Activated T-helper 1 cell treated with anti-CD3 and anti-CD28 coated beads, Interleukin-12 subunit alpha, Interleukin-12 subunit beta, Interleukin-2, Interleukin-4 antibody, amounts not matched to agents 30 ng/mL and 10 ng/mL and 1 ng/mL, durations not matched to agents 14 hours and 24 hours and 36 hours (primary cell): ENCODE measurements at regions of chr10 and their contacts with region 1.

Region 1: DNA sequence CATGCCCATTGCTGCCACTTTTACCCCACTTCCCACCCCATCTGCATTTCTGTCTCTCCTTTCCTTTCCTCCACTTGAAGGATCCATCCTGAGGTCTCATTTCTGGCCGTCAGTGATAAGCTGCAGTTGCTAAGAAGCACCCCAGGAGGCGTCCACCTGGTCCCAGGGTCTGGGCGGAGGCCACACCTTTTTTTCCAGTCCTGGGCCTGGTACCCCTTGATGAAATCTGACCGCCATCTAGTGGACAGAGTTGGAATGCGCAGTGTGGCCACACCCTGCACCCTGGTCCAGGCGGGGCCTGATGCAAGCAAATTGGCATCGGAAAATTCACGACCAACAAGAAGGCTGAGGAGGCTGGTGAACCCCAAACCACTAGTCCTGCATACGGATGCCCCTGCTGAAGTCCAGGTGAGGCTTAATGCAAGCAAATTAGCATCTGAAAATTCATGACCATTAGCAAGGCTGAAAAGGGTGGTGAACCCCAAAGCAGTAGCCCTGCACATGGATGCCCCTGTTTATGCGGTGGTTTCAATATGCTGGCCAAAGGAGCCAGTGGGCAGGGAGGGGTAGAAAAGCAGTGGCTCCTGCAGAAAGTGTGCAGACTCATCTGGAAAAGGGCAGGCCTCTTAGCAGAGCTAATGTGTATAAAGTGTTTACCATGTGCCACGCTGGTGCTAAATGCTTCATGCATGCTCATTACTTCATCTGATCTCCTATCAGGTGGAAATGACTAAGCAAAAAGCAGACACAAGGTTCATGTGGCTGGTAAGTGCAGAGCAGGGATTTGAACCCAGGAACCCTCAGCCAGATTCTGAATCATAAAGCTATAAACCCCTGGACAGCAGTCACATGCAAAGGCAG is 43.2 kb downstream of the GPAM start:
- DNase-seq: peak; percentile 55
- H3K4me3 Mint-ChIP-seq: no peak overlapping the region
- H3K27ac Mint-ChIP-seq: no peak overlapping the region
- H3K4me1 Mint-ChIP-seq: no peaks in the 10 kb centered on the region
- H3K27me3 Mint-ChIP-seq: peaks cover 7% of the 10 kb centered on the region

Region 2: GRCh38 chr10:111756217-111757061 is 383.9 kb before region 1 on chr10:
- intact Hi-C with region 1: loop called (anchors 5 kb)
- DNase-seq: no peak
- H3K4me3 Mint-ChIP-seq: no peak overlapping the region
- H3K27ac Mint-ChIP-seq: no peak overlapping the region
- H3K4me1 Mint-ChIP-seq: no peaks in the 10 kb centered on the region
- H3K27me3 Mint-ChIP-seq: peaks cover 4% of the 10 kb centered on the region

Region 3: DNA sequence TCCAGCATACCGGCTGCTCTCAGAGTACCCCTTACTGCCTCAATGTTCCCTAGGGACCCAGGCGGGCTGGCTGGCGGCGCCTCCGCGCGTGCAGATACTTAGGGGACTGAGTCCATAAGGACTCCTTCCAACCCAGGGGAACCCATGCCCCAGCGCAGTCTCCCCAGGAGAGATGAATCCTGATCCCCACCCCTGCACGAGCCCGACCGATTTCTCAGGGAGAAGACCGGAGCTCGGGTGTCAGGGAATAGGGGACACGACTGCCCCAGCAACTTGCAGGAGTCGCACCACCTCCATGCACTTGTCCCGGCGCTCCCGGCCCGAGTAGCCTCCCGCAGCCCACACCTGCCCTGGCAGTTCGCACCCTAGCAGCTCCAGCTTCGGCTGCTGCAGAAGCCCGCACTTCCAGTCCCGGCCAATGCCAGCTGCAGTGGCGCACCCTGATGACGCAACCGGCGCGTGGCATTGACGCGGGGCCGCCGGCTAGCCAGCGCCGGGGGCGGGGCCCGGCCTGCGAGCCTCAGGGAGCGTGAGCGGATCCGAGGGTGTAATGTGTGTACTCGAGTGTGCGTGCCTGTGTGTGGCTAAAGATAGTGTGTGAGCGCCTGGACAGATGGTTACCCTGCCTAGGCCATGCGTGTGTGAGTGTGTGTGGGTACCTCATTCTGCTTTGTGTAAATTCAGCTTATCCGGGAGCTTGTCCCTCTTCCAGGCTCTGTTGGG is 43.1 kb after region 1 on chr10 and contains the start of gene GPAM:
- intact Hi-C with region 1: loop called (anchors 1 kb)
- DNase-seq: peak; percentile 98
- H3K4me3 Mint-ChIP-seq: peak within 1 kb of the TSS; percentile 86
- H3K27ac Mint-ChIP-seq: peak within 1 kb of the TSS; percentile 93
- H3K4me1 Mint-ChIP-seq: peaks cover 34% of the 10 kb centered on the region
- H3K27me3 Mint-ChIP-seq: peaks cover 4% of the 10 kb centered on the region
- total RNA-seq, gene GPAM: 10.2 and 10.5 TPM in 2 replicates

Region 4: DNA sequence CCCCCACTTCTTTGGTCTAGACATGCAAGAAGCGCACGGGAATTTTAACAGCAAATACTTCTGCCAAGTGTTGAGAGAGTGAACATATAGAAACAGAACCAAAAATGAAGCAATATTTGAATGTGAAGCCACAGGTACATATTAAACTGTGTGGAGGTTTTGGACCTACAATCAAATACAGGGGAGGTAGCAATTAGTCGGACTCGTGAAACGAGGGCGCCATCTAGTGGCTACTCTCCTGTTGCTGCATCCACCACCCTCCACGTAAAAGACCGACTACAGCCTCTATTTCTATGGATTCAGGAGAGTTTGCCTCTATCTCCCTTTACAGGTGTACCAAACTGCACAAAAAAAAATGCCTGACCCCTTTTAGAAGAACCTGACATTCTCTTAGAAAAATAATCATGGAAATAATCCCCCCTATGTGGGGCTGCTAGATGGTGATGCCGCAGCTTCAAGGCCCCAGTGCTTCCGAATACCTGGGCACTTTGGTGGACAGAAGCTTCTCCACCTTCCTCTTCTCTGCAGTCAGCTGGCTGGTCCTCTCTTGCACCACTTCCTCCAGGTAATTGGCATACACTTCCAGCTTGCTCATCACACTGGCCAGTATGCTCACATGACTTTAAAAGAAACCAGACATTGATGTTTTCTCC is 174.6 kb after region 1 on chr10:
- intact Hi-C with region 1: loop called (anchors 1 kb)
- DNase-seq: peak; percentile 50
- H3K4me3 Mint-ChIP-seq: no peak overlapping the region
- H3K27ac Mint-ChIP-seq: no peak overlapping the region
- H3K4me1 Mint-ChIP-seq: peaks cover 4% of the 10 kb centered on the region
- H3K27me3 Mint-ChIP-seq: peaks cover 18% of the 10 kb centered on the region

Region 5: DNA sequence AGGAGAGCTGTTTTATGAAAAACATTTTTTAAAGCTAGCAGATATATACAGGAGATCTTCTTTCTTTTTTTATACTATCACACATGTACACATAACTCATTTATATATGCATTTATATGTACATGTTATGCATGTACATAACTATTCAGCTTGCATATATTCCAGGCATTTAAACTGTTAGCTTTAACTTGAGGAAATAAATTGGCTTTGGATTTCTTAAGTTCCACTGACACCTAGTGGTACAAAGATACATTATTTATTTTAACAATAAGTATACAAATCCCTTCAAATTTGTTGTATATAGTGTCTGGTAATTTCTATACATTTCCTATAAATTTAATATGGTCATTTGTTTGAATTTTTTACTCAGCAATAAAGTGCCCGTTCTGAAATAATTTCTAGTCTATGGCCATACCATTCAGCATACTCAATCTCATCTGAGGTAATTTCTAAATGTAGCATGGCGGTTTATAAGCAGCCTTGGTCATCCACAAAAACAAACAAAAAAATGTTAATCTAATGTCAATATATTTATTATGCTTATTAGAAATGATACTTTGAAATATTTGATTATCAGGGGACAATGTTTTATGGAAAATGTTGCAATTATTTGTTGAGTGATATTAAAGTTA is 294.8 kb after region 1 on chr10:
- intact Hi-C with region 1: loop called (anchors 2 kb)
- DNase-seq: no peak
- H3K4me3 Mint-ChIP-seq: no peak overlapping the region
- H3K27ac Mint-ChIP-seq: no peak overlapping the region
- H3K4me1 Mint-ChIP-seq: peaks cover 5% of the 10 kb centered on the region
- H3K27me3 Mint-ChIP-seq: no peaks in the 10 kb centered on the region

Region 6: DNA sequence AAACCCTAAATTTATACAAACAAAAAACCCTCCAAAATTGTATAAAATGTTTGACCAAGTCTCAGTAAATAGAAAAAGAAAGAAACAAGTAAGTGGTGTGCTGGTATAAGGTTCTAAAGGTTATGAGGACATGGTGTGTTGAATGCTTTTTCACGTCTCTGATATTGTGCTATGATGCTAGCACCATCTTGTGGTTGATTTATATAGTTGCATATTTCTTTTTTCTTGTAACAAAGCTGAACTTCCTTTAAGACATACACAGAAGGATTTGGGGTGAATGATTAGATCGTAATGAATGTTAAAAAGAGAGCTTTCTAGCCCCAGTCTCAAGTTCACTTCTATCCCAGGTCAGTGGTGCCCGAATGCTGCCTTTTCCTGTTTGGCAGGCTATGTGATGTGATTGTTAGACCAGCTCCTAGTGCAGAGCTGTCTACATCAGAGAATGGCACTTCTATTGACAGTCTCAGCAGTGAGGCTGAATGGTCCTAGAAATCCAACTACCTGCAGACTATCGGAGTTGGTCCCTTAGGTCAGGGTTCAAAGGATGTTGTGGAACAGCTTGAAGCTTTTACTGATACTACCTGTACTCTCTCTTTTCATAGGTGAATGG is 331.6 kb after region 1 on chr10:
- intact Hi-C with region 1: loop called (anchors 1 kb)
- DNase-seq: no peak
- H3K4me3 Mint-ChIP-seq: no peak overlapping the region
- H3K27ac Mint-ChIP-seq: no peak overlapping the region
- H3K4me1 Mint-ChIP-seq: no peaks in the 10 kb centered on the region
- H3K27me3 Mint-ChIP-seq: no peaks in the 10 kb centered on the region